ENCODE measurements at regions of chr12 and their contacts with region 1.

Region 1: GRCh38 chr12:47904713-47905310 is at the start of gene VDR:
- DNase-seq: peak; percentile 75
- ATAC-seq: peak; percentile 62
- H3K4me3 ChIP-seq: peak within 1 kb of the TSS; percentile 86
- H3K27ac ChIP-seq: peak within 1 kb of the TSS; percentile 72
- H3K4me1 ChIP-seq: peaks cover 41% of the 10 kb centered on the region
- H3K27me3 ChIP-seq: no peaks in the 10 kb centered on the region
- CTCF ChIP-seq: no peak
- total RNA-seq, gene VDR: 19.6 and 19.9 TPM in 2 replicates

Region 2: DNA sequence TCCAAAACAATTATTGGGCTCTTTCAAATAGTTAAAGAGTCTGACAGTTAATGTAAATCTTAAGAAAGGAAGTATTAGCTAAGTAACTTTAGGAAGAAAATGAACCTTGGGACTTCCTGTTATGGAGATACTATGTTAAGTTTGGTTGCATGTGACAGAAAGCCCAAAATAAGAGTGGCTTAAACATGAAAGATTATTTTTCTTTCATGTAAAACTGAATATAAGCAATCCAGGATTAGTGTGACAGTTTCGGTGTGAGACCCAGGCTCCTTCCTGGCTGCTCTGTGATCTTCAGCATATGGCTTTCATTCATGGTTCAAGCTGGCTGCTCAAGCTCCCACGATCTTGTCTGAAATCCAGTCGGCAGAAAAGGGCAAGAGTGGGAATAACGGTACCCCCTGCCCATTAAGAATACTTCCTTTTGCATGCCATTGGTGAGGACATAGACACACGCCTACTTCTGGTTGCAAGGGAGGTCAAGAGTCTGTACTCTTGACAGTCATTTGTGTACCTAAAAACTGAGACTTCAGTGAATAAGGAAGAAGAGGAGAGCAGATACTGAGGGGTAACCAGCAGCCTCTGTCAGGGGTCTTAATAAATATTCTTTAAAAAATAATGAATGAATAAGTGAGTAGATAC is 196.8 kb before region 1 on chr12:
- CTCF ChIA-PET with region 1: no interaction called
- POLR2A ChIA-PET with region 1: no interaction called
- intact Hi-C with region 1: no loop called
- DNase-seq: no peak
- ATAC-seq: no peak
- H3K4me3 ChIP-seq: no peak overlapping the region
- H3K27ac ChIP-seq: no peak overlapping the region
- H3K4me1 ChIP-seq: peaks cover 17% of the 10 kb centered on the region
- H3K27me3 ChIP-seq: no peaks in the 10 kb centered on the region
- CTCF ChIP-seq: no peak

Region 3: GRCh38 chr12:47870175-47870781 is 34.5 kb before region 1 on chr12:
- CTCF ChIA-PET with region 1: interaction called, 14 read pairs
- POLR2A ChIA-PET with region 1: interaction called, 5 read pairs
- intact Hi-C with region 1: no loop called
- DNase-seq: peak; percentile 28
- ATAC-seq: peak; percentile 81
- H3K4me3 ChIP-seq: no peak overlapping the region
- H3K27ac ChIP-seq: no peak overlapping the region
- H3K4me1 ChIP-seq: no peaks in the 10 kb centered on the region
- H3K27me3 ChIP-seq: no peaks in the 10 kb centered on the region
- CTCF ChIP-seq: peak; percentile 59

Region 4: DNA sequence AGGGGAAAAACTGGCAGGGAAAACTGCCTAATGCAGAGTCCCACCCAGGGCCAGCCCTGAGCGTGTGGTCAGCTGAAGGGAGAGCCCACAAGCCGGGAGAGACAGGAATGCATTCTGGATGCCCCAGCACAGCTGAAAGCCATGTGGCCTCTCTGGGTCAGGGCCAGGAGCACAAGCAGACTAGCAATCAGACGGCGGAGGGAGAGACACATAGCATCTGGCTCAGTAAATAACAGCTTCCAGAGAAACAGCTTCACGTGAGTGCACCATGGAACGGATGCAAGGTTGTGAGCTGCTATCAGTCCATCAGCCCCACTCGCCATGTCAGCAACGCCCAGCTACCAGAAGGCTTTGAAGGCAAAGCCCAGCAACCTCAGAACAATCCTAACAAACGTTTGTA is 30.4 kb after region 1 on chr12:
- CTCF ChIA-PET with region 1: no interaction called
- POLR2A ChIA-PET with region 1: no interaction called
- intact Hi-C with region 1: no loop called
- DNase-seq: no peak
- ATAC-seq: no peak
- H3K4me3 ChIP-seq: no peak overlapping the region
- H3K27ac ChIP-seq: no peak overlapping the region
- H3K4me1 ChIP-seq: peaks cover 11% of the 10 kb centered on the region
- H3K27me3 ChIP-seq: peaks cover 13% of the 10 kb centered on the region
- CTCF ChIP-seq: no peak

Region 5: GRCh38 chr12:47949441-47950308 is 44.9 kb after region 1 on chr12:
- CTCF ChIA-PET with region 1: interaction called, 18 read pairs
- POLR2A ChIA-PET with region 1: interaction called, 8 read pairs
- intact Hi-C with region 1: loop called (anchors 1 kb)
- DNase-seq: peak; percentile 86
- ATAC-seq: peak; percentile 96
- H3K4me3 ChIP-seq: no peak overlapping the region
- H3K27ac ChIP-seq: no peak overlapping the region
- H3K4me1 ChIP-seq: peaks cover 7% of the 10 kb centered on the region; the same call in 1 of the 2 replicates
- H3K27me3 ChIP-seq: no peaks in the 10 kb centered on the region
- CTCF ChIP-seq: peak; percentile 89

Region 6: DNA sequence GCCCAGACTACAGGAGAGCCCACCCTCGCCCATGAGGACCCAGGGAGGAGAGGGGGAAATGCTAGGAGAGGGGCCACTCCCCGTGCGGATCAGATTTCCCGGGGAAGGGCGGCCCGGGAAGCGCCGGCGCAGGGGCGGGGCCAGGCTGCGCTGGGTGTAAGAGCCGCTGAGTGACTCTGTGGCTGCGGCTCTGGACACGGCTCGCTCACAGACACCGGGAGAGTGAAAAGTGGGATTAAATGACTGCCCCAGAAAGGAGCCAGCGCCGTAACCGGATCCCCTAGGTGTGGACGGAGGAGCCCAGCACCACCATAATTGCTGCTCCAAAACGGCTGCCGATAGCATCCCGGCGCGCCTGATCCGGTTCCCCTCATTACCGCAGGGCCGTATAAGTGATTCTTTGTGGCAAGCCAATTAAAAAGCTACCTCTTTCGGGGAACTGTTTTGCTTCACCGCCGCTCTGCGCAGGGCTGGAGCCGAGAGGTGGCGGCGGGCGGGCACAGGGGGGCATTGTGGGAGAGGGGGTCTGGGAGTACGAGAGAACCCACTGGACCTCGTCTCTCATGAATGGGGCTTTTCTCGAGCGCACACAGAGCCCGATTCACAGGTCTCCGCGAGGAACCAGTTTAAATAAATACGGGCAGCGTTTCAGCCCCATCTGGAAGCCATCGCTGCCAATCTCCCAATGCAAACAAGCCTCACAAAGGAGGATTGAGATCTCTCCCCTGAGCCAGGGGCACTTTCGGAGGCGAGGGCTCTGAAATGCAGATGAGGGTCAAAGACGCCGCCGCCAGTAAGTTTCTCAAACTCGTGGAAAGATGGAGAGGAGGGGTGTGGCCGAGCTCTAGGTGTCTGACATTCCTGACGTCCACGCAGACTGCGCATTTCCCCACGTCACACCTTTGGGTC is 96.9 kb after region 1 on chr12:
- CTCF ChIA-PET with region 1: no interaction called
- POLR2A ChIA-PET with region 1: no interaction called
- intact Hi-C with region 1: no loop called
- DNase-seq: peak; percentile 58
- ATAC-seq: peak; percentile 78
- H3K4me3 ChIP-seq: peak overlapping the region; percentile 72
- H3K27ac ChIP-seq: peak overlapping the region; percentile 51
- H3K4me1 ChIP-seq: peaks cover 45% of the 10 kb centered on the region
- H3K27me3 ChIP-seq: peaks cover 37% of the 10 kb centered on the region
- CTCF ChIP-seq: no peak

Region 7: GRCh38 chr12:48021485-48022179 is 116.8 kb after region 1 on chr12:
- CTCF ChIA-PET with region 1: no interaction called
- POLR2A ChIA-PET with region 1: no interaction called
- intact Hi-C with region 1: loop called (anchors 10 kb)
- DNase-seq: peak; percentile 98
- ATAC-seq: peak; percentile 93
- H3K4me3 ChIP-seq: no peak overlapping the region
- H3K27ac ChIP-seq: peak overlapping the region; percentile 72
- H3K4me1 ChIP-seq: peaks cover 33% of the 10 kb centered on the region
- H3K27me3 ChIP-seq: no peaks in the 10 kb centered on the region
- CTCF ChIP-seq: no peak

Region 8: GRCh38 chr12:48183091-48183875 is 278.5 kb after region 1 on chr12 and contains the start of gene CCDC184:
- CTCF ChIA-PET with region 1: no interaction called
- POLR2A ChIA-PET with region 1: no interaction called
- intact Hi-C with region 1: loop called (anchors 10 kb)
- DNase-seq: peak; percentile 15
- ATAC-seq: peak; percentile 51
- H3K4me3 ChIP-seq: peak within 1 kb of the TSS; percentile 56
- H3K27ac ChIP-seq: no peak within 1 kb of the TSS
- H3K4me1 ChIP-seq: peaks cover 13% of the 10 kb centered on the region
- H3K27me3 ChIP-seq: peaks cover 45% of the 10 kb centered on the region
- CTCF ChIP-seq: peak; percentile 42
- total RNA-seq, gene CCDC184: not detected in 2 replicates

Region 9: GRCh38 chr12:48340943-48341342 is 436.1 kb after region 1 on chr12:
- CTCF ChIA-PET with region 1: no interaction called
- POLR2A ChIA-PET with region 1: no interaction called
- intact Hi-C with region 1: no loop called
- DNase-seq: no peak
- ATAC-seq: no peak
- H3K4me3 ChIP-seq: no peak overlapping the region
- H3K27ac ChIP-seq: no peak overlapping the region
- H3K4me1 ChIP-seq: no peaks in the 10 kb centered on the region
- H3K27me3 ChIP-seq: no peaks in the 10 kb centered on the region
- CTCF ChIP-seq: no peak

Measured in PC-3 (cell line).